Mammary epithelial cell (primary cell): ENCODE measurements at regions of chr11 and their contacts with region 1.

Region 1: GRCh38 chr11:59822989-59823566 is 12.5 kb upstream of the MRPL16 start:
- DNase-seq: peak; percentile 65
- H3K4me3 ChIP-seq: no peak overlapping the region
- H3K27ac ChIP-seq: no peak overlapping the region
- H3K4me1 ChIP-seq: no peaks in the 10 kb centered on the region
- H3K27me3 ChIP-seq: no peaks in the 10 kb centered on the region
- CTCF ChIP-seq: peak; percentile 71 to 73

Region 2: DNA sequence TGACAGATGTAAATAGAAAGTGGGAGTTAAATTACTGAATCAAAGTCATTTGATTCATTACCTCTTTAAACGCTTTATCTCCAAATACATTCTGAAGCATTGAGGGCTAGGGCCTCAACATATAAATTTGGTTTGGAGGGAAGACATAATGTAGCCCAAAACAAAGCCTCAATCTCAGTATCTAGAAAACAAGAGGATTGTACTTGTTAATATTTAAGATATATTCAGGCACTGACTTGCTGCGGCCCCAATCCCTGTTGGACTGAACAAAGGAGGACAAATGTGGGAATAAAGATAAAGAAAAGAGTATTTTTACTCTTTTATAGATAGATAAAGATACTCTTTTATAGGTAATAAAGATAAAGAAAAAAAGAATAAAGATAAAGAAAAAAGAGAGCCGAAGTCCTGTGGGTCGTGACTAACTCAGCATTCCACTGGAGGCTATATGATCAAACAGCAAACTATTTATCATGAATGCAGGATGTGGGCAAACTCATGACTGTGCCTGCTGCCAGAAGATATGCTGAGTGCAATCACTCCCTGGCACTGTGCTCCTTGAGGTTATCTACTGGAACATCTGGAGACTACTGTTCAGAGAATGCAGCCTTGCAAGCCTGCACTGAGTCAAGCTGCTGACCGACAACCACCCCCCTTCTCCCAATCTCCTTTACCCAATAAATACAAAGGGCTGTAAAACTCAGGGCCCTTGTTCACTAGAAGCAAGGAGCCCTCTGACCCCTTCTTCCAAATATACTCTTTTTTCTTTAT is 116.4 kb before region 1 on chr11:
- CTCF ChIA-PET with region 1: no interaction called
- dilution Hi-C with region 1: no loop called
- in situ Hi-C with region 1: no loop called
- intact Hi-C with region 1: no loop called
- DNase-seq: peak; percentile 94
- H3K4me3 ChIP-seq: no peak overlapping the region
- H3K27ac ChIP-seq: peak overlapping the region; percentile 94
- H3K4me1 ChIP-seq: peaks cover 37% of the 10 kb centered on the region
- H3K27me3 ChIP-seq: no peaks in the 10 kb centered on the region
- CTCF ChIP-seq: no peak

Region 3: GRCh38 chr11:59719556-59719955 is 103.5 kb before region 1 on chr11:
- CTCF ChIA-PET with region 1: no interaction called
- dilution Hi-C with region 1: no loop called
- in situ Hi-C with region 1: no loop called
- intact Hi-C with region 1: no loop called
- DNase-seq: no peak
- H3K4me3 ChIP-seq: no peak overlapping the region
- H3K27ac ChIP-seq: no peak overlapping the region
- H3K4me1 ChIP-seq: no peaks in the 10 kb centered on the region
- H3K27me3 ChIP-seq: no peaks in the 10 kb centered on the region
- CTCF ChIP-seq: no peak

Region 4: DNA sequence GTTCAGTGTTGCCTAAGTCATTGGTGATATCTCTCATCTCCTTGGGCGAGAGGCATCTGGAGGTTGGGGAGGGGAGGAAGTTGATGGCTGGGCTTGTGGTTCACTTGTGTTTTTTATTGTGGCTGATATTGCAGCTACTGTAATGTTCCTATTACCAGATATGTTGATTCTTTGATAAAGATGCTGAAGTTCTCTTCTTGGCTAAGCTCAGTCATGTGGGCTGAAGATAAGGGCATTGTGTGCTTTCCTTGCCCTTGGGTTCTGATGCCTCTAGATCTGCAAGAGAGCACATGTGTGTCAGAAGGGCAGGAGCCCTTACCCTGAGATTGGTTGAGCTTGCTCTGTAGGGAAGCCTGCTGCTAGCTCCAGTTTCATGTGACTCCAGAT is 55.9 kb before region 1 on chr11:
- CTCF ChIA-PET with region 1: no interaction called
- dilution Hi-C with region 1: no loop called
- in situ Hi-C with region 1: no loop called
- intact Hi-C with region 1: no loop called
- DNase-seq: no peak
- H3K4me3 ChIP-seq: no peak overlapping the region
- H3K27ac ChIP-seq: no peak overlapping the region
- H3K4me1 ChIP-seq: no peaks in the 10 kb centered on the region
- H3K27me3 ChIP-seq: no peaks in the 10 kb centered on the region
- CTCF ChIP-seq: no peak

Region 5: GRCh38 chr11:60193687-60194433 is 370.8 kb after region 1 on chr11:
- CTCF ChIA-PET with region 1: no interaction called
- dilution Hi-C with region 1: no loop called
- in situ Hi-C with region 1: no loop called
- intact Hi-C with region 1: loop called (anchors 5 kb)
- DNase-seq: peak; percentile 89
- H3K4me3 ChIP-seq: no peak overlapping the region
- H3K27ac ChIP-seq: no peak overlapping the region
- H3K4me1 ChIP-seq: peaks cover 4% of the 10 kb centered on the region
- H3K27me3 ChIP-seq: no peaks in the 10 kb centered on the region
- CTCF ChIP-seq: peak; percentile 99